ENCODE measurements at regions of chr21 and their contacts with region 1.

Region 1: GRCh38 chr21:32403201-32403777 is 9.2 kb upstream of the EVA1C start:
- DNase-seq: peak in 1 of 2 donors; percentile 83
- H3K4me3 ChIP-seq: no peak overlapping the region
- H3K27ac ChIP-seq: no peak overlapping the region
- H3K4me1 ChIP-seq: peaks cover 0 to 2% of the 10 kb centered on the region in 2 donors
- H3K27me3 ChIP-seq: no peaks in the 10 kb centered on the region
- CTCF ChIP-seq: peak; percentile 71 to 77 (median 72)

Region 2: GRCh38 chr21:32597205-32597604 is 193.9 kb after region 1 on chr21:
- intact Hi-C with region 1: loop called (anchors 1 kb)
- DNase-seq: no peak
- H3K4me3 ChIP-seq: no peak overlapping the region
- H3K27ac ChIP-seq: no peak overlapping the region
- H3K4me1 ChIP-seq: no peaks in the 10 kb centered on the region
- H3K27me3 ChIP-seq: no peaks in the 10 kb centered on the region
- CTCF ChIP-seq: no peak

Measured in ascending aorta (tissue), 2 donors.